WTC11 (cell line): ENCODE measurements at regions of chr1 and their contacts with region 1.

Region 1: DNA sequence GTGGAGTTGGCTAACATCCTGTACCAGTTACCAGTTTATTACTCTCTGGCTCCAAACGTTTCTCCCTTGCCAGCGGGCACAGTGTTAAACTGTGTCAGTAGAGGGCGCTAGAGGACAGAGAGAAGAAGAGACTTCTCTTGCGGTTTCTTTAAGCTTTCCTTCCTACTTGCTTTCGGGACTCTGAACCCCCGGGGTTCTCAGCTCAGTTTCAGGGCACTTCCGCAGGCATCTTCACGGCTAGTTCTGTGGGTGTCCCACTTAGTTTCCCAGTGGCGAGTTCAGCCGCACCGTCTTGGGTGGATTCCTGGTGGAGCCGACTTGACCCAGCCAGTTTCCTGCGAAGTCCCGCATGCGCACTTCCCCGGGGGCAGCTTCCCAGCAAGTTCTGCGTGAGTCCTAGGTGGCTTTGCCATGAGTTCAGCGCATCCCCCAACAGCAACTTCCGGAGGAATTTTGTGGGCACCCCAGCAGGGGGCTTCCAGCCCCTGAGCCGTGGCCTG is 37.9 kb upstream of the BTG2 start:
- DNase-seq: peak; percentile 86
- ATAC-seq: peak; percentile 58
- H3K4me3 Mint-ChIP-seq: peak overlapping the region; percentile 76
- H3K27ac Mint-ChIP-seq: no peak overlapping the region; the same call in 1 of the 2 replicates
- H3K4me1 Mint-ChIP-seq: peaks cover 11% of the 10 kb centered on the region
- H3K27me3 Mint-ChIP-seq: peaks cover 10% of the 10 kb centered on the region
- CTCF ChIP-seq: peak; percentile 85

Region 2: DNA sequence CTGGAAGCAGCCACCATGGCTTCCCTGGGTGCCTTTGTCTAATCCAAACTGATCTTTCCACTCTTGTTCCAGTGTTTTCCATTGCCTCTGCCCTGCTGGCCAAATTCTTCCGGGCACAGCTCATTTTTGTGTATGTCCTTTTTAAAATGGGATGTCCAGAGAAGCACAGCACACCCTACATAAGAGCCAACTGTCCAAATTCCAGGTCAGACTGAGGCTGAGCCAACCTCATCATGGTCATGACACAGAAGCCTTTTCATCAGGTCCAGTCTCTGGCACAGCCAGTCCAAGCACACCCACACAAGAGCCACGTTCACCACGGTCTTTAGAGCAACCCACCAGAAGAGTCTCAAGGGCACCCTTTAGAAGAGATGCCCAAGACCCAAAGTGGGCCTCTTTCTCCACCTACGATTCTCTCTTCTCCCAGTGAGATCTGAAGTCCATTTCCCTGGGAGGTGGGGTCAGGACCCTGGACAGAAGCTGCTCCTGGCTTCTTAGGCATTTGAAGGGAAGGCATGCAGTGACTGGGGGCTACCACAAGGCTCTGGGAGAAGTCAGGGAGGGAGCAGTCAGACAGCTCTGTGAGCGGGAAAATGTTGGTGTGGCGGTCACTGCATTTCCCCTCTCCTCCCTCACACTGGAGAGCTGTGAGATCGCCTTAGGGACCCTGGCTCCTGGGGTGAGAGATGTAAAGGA is 610.3 kb before region 1 on chr1:
- CTCF ChIA-PET with region 1: no interaction called
- POLR2A ChIA-PET with region 1: no interaction called
- DNase-seq: peak; percentile 85
- ATAC-seq: peak; percentile 90
- H3K4me3 Mint-ChIP-seq: no peak overlapping the region
- H3K27ac Mint-ChIP-seq: no peak overlapping the region
- H3K4me1 Mint-ChIP-seq: peaks cover 9% of the 10 kb centered on the region; the same call in 1 of the 2 replicates
- H3K27me3 Mint-ChIP-seq: no peaks in the 10 kb centered on the region
- CTCF ChIP-seq: no peak

Region 3: DNA sequence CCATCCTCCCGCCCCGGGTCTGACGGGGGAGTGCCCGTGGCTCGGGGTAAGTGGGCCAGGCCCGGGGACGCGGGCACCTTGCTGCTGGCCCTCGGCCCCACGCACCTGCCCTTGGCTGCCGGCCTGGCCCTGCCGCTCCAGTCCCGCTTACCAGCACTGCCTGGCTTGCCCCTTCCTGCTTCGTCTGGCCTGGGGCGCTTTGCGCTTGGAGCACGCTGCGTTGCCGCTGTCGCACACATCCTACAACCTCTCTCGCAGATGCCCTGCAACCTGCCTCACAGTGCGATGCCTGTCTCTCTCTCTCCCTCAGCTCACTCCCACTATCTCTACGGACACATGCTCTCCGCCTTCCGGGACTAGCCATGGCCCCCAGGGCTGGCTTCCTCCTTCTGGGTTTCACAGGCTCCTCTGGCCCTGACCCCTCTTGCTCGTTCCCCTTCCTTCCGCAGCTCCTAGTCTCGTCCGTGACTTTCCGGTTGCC is 191.3 kb before region 1 on chr1:
- CTCF ChIA-PET with region 1: interaction called, 16 read pairs
- POLR2A ChIA-PET with region 1: no interaction called
- DNase-seq: peak; percentile 26
- ATAC-seq: peak; percentile 41
- H3K4me3 Mint-ChIP-seq: peak overlapping the region; percentile 45
- H3K27ac Mint-ChIP-seq: no peak overlapping the region
- H3K4me1 Mint-ChIP-seq: peaks cover 4% of the 10 kb centered on the region
- H3K27me3 Mint-ChIP-seq: peaks cover 19% of the 10 kb centered on the region
- CTCF ChIP-seq: no peak

Region 4: GRCh38 chr1:203148125-203148524 is 119.3 kb before region 1 on chr1:
- CTCF ChIA-PET with region 1: interaction called, 12 read pairs
- POLR2A ChIA-PET with region 1: no interaction called
- DNase-seq: peak; percentile 44
- ATAC-seq: peak; percentile 50
- H3K4me3 Mint-ChIP-seq: no peak overlapping the region
- H3K27ac Mint-ChIP-seq: no peak overlapping the region
- H3K4me1 Mint-ChIP-seq: peaks cover 87% of the 10 kb centered on the region
- H3K27me3 Mint-ChIP-seq: no peaks in the 10 kb centered on the region
- CTCF ChIP-seq: no peak

Region 5: DNA sequence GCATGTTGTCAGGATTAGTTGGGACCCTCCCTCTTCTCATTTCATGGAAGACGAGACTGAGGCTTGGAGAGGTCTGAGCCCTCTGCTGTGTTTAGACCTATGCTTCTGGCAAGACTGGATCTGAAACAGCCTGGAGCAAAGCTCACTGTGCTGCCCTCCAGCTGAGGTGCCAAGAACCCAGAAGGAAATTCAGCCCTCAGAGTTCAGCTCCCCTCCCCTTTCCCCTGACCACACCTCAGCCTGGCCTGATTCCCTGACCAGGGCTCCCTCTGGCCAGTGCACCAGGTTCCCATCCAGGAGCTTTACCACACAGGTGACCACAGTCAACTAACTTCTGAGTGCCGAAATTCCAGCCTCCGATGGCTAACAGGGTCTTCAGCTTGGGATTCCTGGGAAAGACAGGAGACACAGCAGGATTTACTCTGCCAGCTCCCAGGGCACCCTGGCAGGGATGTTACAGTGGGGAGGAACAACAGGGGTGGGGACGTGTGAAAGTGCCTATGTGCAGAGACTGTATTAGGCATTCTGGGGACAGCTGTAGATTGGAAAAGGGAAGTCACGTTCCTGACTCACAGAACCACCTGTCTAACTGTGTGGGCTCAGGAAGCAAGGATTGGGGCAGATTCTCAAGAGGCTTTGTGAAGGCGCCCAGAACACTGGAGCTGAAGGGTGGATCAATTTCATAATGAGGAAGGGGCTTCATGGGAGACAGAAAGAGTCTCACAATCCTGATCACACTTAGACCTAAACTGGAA is 42.5 kb before region 1 on chr1:
- CTCF ChIA-PET with region 1: interaction called, 14 read pairs
- POLR2A ChIA-PET with region 1: no interaction called
- DNase-seq: no peak
- ATAC-seq: no peak
- H3K4me3 Mint-ChIP-seq: no peak overlapping the region
- H3K27ac Mint-ChIP-seq: no peak overlapping the region
- H3K4me1 Mint-ChIP-seq: no peaks in the 10 kb centered on the region
- H3K27me3 Mint-ChIP-seq: peaks cover 3% of the 10 kb centered on the region; the same call in 1 of the 2 replicates
- CTCF ChIP-seq: no peak

Region 6: DNA sequence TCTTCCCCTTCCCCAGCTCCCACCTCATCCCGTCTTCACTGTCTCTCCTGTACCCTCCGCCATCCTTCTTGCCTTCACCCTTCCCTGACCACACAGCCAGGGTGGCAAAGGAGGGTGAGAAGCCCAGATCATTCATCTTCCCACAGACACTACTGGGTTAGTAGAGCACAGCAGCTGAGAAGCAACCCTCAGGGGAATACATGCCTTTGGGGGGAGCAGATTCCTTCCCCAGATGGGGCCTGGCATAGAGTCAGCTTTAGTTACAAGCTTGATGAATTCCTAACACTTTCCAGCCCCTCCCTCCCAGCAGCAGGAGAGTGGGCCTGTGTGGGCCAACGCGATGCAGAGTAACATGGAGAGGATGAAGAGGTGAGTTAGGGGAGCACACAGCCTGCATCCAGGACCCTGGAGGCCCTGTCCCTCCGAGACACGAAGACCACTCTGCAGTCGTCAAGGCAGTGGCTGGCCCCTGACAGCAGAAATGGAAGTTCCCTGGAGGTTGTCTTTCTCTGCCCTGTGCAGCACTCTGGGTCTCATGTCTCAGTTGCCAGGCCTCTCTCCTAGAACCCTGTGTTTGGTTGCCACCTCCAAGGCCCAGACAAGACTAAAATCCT is 29.2 kb after region 1 on chr1:
- CTCF ChIA-PET with region 1: interaction called, 78 read pairs
- POLR2A ChIA-PET with region 1: interaction called, 5 read pairs
- DNase-seq: no peak
- ATAC-seq: no peak
- H3K4me3 Mint-ChIP-seq: no peak overlapping the region
- H3K27ac Mint-ChIP-seq: no peak overlapping the region
- H3K4me1 Mint-ChIP-seq: peaks cover 7% of the 10 kb centered on the region
- H3K27me3 Mint-ChIP-seq: peaks cover 75% of the 10 kb centered on the region
- CTCF ChIP-seq: no peak

Region 7: DNA sequence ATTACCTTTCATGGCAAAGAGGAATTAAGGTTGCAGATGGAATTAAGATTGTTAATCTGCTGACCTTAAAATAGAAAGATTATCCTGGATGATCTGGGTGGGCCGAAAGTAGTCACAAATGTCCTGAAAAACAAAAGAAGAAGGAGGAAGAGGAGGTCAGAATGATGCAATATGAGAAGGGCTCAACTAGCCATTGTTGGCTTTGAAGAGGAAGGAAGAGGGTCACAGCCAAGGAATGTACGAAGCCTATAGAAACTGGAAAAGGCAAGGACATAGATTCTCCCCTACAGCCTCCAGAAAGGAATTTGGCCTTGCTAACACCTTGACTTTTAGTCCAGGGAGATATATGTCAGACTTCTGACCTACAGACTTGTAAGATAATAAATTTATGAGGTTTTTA is 122.9 kb after region 1 on chr1:
- CTCF ChIA-PET with region 1: no interaction called
- POLR2A ChIA-PET with region 1: no interaction called
- DNase-seq: no peak
- ATAC-seq: no peak
- H3K4me3 Mint-ChIP-seq: no peak overlapping the region
- H3K27ac Mint-ChIP-seq: no peak overlapping the region
- H3K4me1 Mint-ChIP-seq: no peaks in the 10 kb centered on the region
- H3K27me3 Mint-ChIP-seq: no peaks in the 10 kb centered on the region; the same call in 1 of the 2 replicates
- CTCF ChIP-seq: no peak

Region 8: GRCh38 chr1:203408486-203409427 is 141.4 kb after region 1 on chr1:
- CTCF ChIA-PET with region 1: no interaction called
- POLR2A ChIA-PET with region 1: no interaction called
- DNase-seq: no peak
- ATAC-seq: no peak
- H3K4me3 Mint-ChIP-seq: no peak overlapping the region
- H3K27ac Mint-ChIP-seq: no peak overlapping the region
- H3K4me1 Mint-ChIP-seq: no peaks in the 10 kb centered on the region
- H3K27me3 Mint-ChIP-seq: peaks cover 16% of the 10 kb centered on the region
- CTCF ChIP-seq: no peak

Region 9: GRCh38 chr1:203440771-203441170 is 173.4 kb after region 1 on chr1:
- CTCF ChIA-PET with region 1: interaction called, 12 read pairs
- POLR2A ChIA-PET with region 1: no interaction called
- DNase-seq: peak; percentile 32
- ATAC-seq: peak; percentile 64
- H3K4me3 Mint-ChIP-seq: no peak overlapping the region
- H3K27ac Mint-ChIP-seq: no peak overlapping the region
- H3K4me1 Mint-ChIP-seq: peaks cover 24% of the 10 kb centered on the region
- H3K27me3 Mint-ChIP-seq: peaks cover 11% of the 10 kb centered on the region
- CTCF ChIP-seq: no peak